ENCODE measurements at regions of chr3 and their contacts with region 1.

Region 1: DNA sequence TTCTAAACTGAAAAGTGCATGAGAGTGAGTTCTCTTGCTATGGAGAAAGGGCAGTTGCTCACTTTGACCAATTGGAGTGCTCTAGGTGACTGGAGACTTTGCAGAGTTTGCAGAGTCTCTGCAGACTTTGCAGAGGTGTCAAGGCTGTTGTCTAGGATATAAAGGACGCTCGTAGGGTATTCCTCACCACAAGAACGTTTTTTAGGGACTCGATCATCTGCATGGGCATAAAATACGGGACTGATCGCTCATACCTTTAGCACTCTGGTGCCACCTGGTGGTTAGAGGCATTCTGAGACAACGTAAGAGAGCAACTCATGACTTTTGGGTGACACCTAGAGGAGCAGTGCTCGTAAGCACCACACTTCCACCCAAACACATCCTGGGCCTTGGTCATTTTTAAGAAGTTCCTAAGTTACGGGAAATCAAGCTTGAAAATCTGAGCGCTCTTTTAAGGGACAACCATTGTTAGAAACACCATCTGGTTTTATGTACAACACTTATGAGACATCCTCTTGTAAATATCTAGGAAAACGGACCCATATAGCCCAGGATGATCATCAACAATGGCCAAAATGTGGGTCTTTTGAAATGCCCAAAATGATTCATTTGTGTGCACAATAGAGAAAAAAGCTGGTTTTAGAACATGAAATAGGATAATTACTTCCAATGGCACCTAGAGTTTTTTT is 51.6 kb upstream of the XCR1 start:
- DNase-seq: peak in 9 of 10 donors; percentile 35 to 95 (median 86)

Region 2: DNA sequence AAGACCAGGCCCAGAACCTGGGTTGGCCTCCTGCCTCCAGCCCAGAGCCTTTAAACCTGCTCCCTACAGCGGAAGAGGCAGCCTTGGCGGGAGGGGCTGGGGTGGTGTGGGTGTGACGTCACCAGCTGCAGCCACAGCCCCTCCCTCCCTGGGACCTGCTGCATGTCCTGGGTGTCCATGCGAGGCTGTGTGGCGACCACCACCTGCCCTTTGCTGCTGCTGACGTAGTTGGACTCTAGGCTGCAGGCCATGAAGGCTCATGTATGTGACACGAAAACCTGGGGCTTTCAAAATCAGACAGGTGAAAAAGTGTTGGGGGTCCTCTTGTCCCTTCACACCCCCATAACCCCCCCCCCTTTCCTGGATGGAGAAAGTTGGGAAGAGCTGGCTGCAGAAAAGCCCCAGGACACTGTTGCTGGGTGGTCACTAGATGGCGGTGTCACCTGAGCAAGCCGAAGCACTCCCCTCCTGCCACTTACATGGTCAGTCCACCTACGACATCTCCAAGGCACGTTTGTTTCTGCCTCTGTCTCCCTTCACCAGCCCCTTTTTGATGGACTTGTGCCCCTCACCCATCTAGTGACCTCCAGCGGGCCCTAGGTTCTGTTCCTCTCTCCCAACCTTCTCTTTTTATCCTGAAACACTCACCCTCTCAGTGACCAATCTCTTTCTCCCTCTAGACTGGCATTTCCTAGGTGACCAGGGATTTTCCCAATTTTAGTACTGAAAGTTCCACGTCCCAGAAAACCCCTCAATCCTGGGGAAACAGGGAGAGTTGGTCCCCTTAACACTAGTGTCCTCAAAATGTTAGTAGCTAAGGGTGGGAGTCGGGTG is 317.8 kb before region 1 on chr3:
- intact Hi-C with region 1: loop called (anchors 2 kb)
- DNase-seq: peak in 5 of 10 donors; percentile 26 to 93 (median 41)

Region 3: GRCh38 chr3:45841757-45842491 is 236.9 kb before region 1 on chr3 and contains the start of gene LZTFL1:
- intact Hi-C with region 1: loop called (anchors 5 kb)
- DNase-seq: peak; percentile 85 to 98 (median 91)

Region 4: GRCh38 chr3:45938864-45939263 is 140.0 kb before region 1 on chr3:
- intact Hi-C with region 1: loop called (anchors 1 kb)
- DNase-seq: peak; percentile 71 to 97 (median 88)

Region 5: GRCh38 chr3:46632792-46633191 is 553.9 kb after region 1 on chr3:
- intact Hi-C with region 1: no loop called
- DNase-seq: no peak

Measured in posterior cingulate gyrus (tissue), 11 donors.